ENCODE measurements at regions of chr1 and their contacts with region 1.

Region 1: GRCh38 chr1:167599957-167600581 is 30.0 kb upstream of the RCSD1 start:
- DNase-seq: peak; percentile 79
- ATAC-seq: peak; percentile 93
- H3K4me3 ChIP-seq: peak overlapping the region; percentile 4; the same call in 1 of the 2 replicates
- H3K27ac ChIP-seq: peak overlapping the region; percentile 55
- H3K4me1 ChIP-seq: peaks cover 31% of the 10 kb centered on the region
- H3K27me3 ChIP-seq: no peaks in the 10 kb centered on the region
- CTCF ChIP-seq: peak; percentile 58 to 81 (median 80); a peak in 5 of 6 replicates
- EP300 ChIP-seq: no peak
- POLR2A ChIP-seq: no peak
- RAD21 ChIP-seq: peak; percentile 90

Region 2: DNA sequence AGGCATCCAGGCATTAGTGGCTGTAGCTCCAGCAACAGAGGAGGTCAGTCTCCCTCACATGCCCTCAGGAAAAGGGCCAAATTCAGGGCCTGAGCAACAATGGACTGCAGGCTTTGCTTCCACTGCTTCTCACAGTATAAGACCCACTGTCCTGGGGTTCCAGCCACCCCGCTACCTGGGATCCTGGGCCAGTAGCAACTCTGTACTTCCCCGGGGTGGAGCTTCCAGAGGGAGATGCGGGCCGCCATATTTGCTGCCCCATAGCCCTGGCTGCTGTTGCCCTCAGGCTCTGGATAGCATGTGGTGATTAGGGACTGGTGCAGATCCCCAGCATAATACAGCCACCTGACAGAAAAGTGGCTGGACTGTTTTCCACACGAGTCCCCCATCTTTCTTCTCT is 961.9 kb before region 1 on chr1:
- CTCF ChIA-PET with region 1: no interaction called
- POLR2A ChIA-PET with region 1: no interaction called
- RAD21 ChIA-PET with region 1: no interaction called
- SMC1A ChIA-PET with region 1: no interaction called
- in situ Hi-C with region 1: no loop called
- intact Hi-C with region 1: no loop called
- DNase-seq: no peak
- ATAC-seq: no peak
- H3K4me3 ChIP-seq: no peak overlapping the region
- H3K27ac ChIP-seq: no peak overlapping the region
- H3K4me1 ChIP-seq: no peaks in the 10 kb centered on the region
- H3K27me3 ChIP-seq: no peaks in the 10 kb centered on the region
- CTCF ChIP-seq: no peak
- EP300 ChIP-seq: no peak
- POLR2A ChIP-seq: no peak
- RAD21 ChIP-seq: no peak

Region 3: GRCh38 chr1:167553136-167554027 is 46.7 kb before region 1 on chr1 and contains the start of gene CREG1:
- CTCF ChIA-PET with region 1: interaction called, 18 read pairs
- POLR2A ChIA-PET with region 1: no interaction called
- RAD21 ChIA-PET with region 1: interaction called, 9 read pairs
- SMC1A ChIA-PET with region 1: interaction called, 11 read pairs
- in situ Hi-C with region 1: no loop called
- intact Hi-C with region 1: no loop called
- DNase-seq: no peak
- ATAC-seq: peak; percentile 97
- H3K4me3 ChIP-seq: peak within 1 kb of the TSS; percentile 72
- H3K27ac ChIP-seq: peak within 1 kb of the TSS; percentile 51
- H3K4me1 ChIP-seq: peaks cover 9% of the 10 kb centered on the region
- H3K27me3 ChIP-seq: no peaks in the 10 kb centered on the region
- CTCF ChIP-seq: no peak
- EP300 ChIP-seq: no peak
- POLR2A ChIP-seq: peak; percentile 93
- RAD21 ChIP-seq: no peak
- polyA plus RNA-seq, gene CREG1: 5.3 to 11.3 TPM

Region 4: GRCh38 chr1:167627865-167628641 is 28.0 kb after region 1 on chr1:
- CTCF ChIA-PET with region 1: interaction called, 129 read pairs
- POLR2A ChIA-PET with region 1: interaction called, 11 read pairs
- RAD21 ChIA-PET with region 1: interaction called, 159 read pairs
- SMC1A ChIA-PET with region 1: interaction called, 114 read pairs
- in situ Hi-C with region 1: no loop called
- intact Hi-C with region 1: loop called (anchors 1 kb)
- DNase-seq: peak; percentile 89
- ATAC-seq: peak; percentile 77
- H3K4me3 ChIP-seq: peak overlapping the region; percentile 79
- H3K27ac ChIP-seq: peak overlapping the region; percentile 94
- H3K4me1 ChIP-seq: peaks cover 26% of the 10 kb centered on the region
- H3K27me3 ChIP-seq: no peaks in the 10 kb centered on the region
- CTCF ChIP-seq: no peak
- EP300 ChIP-seq: peak; percentile 80 to 84
- POLR2A ChIP-seq: peak; percentile 89
- RAD21 ChIP-seq: no peak

Region 5: DNA sequence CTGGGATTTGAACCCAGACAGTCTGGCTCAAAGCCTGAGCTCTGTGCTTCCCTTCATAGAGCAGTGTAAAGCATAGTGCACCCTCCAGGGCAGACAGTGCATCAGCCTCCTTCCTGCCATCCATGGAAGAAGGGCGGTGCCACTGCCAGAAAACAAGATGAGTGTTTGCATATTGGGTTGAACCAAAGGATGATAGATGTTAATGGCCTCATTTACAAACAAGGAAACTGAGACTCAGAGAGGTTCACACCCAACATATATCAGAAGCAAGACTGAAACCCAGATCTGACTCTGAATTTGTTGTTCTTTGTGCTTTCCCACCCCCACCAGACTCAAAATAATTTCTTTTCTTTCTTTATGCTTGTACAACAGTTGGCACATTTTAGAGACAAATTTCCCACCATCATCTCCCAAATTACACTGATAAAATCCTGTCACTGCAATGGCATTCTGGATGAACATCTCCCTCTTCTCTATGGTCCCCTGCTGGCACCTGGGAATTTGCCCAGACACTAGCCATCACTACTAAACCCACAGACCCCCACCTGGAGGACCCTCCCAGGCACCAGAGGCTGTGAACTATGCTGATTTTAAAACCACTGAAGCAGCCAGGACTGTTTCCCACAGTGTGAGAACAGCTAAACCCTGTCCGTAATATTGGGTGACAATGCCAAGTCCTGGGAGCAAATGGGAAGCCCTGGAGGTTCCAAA is 76.3 kb after region 1 on chr1:
- CTCF ChIA-PET with region 1: interaction called, 30 read pairs
- POLR2A ChIA-PET with region 1: interaction called, 7 read pairs
- RAD21 ChIA-PET with region 1: interaction called, 34 read pairs
- SMC1A ChIA-PET with region 1: interaction called, 108 read pairs
- in situ Hi-C with region 1: no loop called
- intact Hi-C with region 1: no loop called
- DNase-seq: peak; percentile 88
- ATAC-seq: peak; percentile 76
- H3K4me3 ChIP-seq: peak overlapping the region; percentile 35; the same call in 1 of the 2 replicates
- H3K27ac ChIP-seq: peak overlapping the region; percentile 93
- H3K4me1 ChIP-seq: peaks cover 85% of the 10 kb centered on the region
- H3K27me3 ChIP-seq: no peaks in the 10 kb centered on the region
- CTCF ChIP-seq: peak in 2 of 3 experiments; percentile 5 to 12; a peak in 2 of 6 replicates
- EP300 ChIP-seq: peak; percentile 10 to 11; a peak in 1 of 4 replicates
- POLR2A ChIP-seq: no peak
- RAD21 ChIP-seq: no peak

Region 6: GRCh38 chr1:167708940-167709389 is 108.9 kb after region 1 on chr1:
- CTCF ChIA-PET with region 1: interaction called, 21 read pairs
- POLR2A ChIA-PET with region 1: interaction called, 3 read pairs
- RAD21 ChIA-PET with region 1: interaction called, 10 read pairs
- SMC1A ChIA-PET with region 1: interaction called, 31 read pairs
- in situ Hi-C with region 1: no loop called
- intact Hi-C with region 1: no loop called
- DNase-seq: peak; percentile 63
- ATAC-seq: peak; percentile 66
- H3K4me3 ChIP-seq: no peak overlapping the region; the same call in 1 of the 2 replicates
- H3K27ac ChIP-seq: peak overlapping the region; percentile 76
- H3K4me1 ChIP-seq: peaks cover 53% of the 10 kb centered on the region
- H3K27me3 ChIP-seq: no peaks in the 10 kb centered on the region
- CTCF ChIP-seq: no peak
- EP300 ChIP-seq: 0 out of 4 replicates have a peak, but pooled peaks of 1 of the 2 experiments have one; percentile 10
- POLR2A ChIP-seq: no peak
- RAD21 ChIP-seq: no peak

Region 7: DNA sequence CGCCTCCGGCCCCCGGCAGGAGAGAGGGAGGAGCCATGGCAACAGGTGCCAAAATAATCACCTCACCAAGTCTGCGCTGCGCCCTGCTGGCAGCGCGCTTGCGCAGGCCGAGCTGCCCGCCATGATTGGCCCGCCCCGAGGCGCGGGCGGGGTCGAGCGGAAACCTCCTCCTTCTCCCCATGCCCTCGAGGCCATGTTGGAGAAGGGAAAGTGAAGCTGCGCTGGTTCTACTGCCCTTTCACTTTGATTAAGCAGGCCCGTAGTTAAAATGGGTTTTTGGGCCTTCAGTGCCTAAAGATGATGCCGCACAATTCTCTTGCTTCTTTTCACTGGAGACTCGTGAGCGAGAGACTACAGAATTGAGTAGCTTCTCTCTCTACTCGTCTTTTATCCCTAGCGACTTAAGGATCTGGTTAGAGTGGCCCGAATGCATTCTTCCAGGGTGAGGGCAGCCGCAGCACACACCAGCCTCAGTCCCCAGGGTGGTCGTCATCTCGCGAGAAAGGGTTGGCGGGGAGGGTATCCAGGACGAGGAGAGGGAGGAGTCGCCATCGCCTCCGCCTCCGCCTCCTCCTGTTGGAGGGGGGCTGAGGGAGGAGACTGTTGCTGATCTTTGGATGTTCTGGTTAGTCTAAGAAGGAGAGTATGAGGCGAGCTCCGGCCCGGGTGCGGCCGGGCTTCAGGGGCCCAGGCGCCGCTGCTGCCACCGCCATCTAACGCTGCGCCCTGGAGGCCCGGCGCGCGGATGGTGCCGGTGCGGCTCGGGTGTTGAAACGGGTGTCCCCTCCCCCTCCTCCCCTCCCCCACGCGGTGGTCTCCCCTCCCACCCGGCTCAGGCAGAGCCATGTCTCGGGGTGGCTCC is 336.2 kb after region 1 on chr1 and contains the start of gene DCAF6:
- CTCF ChIA-PET with region 1: no interaction called
- POLR2A ChIA-PET with region 1: no interaction called
- RAD21 ChIA-PET with region 1: no interaction called
- SMC1A ChIA-PET with region 1: no interaction called
- in situ Hi-C with region 1: no loop called
- intact Hi-C with region 1: loop called (anchors 10 kb)
- DNase-seq: peak; percentile 98
- ATAC-seq: peak; percentile 82
- H3K4me3 ChIP-seq: peak within 1 kb of the TSS; percentile 95
- H3K27ac ChIP-seq: peak within 1 kb of the TSS; percentile 99
- H3K4me1 ChIP-seq: no peaks in the 10 kb centered on the region
- H3K27me3 ChIP-seq: no peaks in the 10 kb centered on the region
- CTCF ChIP-seq: no peak
- EP300 ChIP-seq: no peak
- POLR2A ChIP-seq: peak; percentile 77
- RAD21 ChIP-seq: no peak
- polyA plus RNA-seq, gene DCAF6: 11.4 to 18.3 TPM

Measured in GM12878 (cell line).